ENCODE measurements at regions of chr18 and their contacts with region 1.

Region 1: GRCh38 chr18:2985628-2986027 is 27.3 kb downstream of the LPIN2 start:
- DNase-seq: peak; percentile 32
- ATAC-seq: peak; percentile 53
- H3K4me3 Mint-ChIP-seq: no peak overlapping the region
- H3K27ac Mint-ChIP-seq: peak overlapping the region; percentile 34
- H3K4me1 Mint-ChIP-seq: peaks cover 72% of the 10 kb centered on the region
- H3K27me3 Mint-ChIP-seq: no peaks in the 10 kb centered on the region
- CTCF ChIP-seq: peak; percentile 74

Region 2: DNA sequence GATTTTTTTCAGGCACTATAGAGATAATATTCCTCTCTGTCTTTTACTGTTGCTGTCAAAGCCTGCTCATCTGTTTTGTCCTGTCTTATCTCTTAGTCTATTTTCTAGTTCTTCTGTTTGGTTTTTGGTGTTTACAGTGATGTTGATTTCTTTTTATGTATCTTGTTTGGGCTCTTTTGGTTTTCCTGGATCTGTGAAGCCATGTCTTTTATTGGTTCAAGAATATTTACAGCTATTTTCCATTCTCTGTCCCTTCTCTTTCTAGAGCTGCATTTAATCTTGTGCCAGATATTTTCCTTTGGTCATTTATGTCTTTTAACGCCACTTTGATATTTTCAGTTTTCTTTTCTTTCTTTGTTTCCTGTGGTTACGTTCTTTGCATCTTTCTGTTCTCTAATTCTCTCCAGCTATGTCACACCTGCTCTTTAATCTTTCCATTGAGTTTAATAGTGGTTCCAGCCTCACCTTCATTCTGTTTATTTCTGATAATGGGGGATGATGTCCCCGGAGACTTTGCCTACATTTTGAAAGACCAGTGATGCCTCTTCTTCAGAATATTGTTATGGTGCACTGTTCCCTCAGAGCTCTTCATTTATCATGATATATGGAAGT is 298.1 kb before region 1 on chr18:
- CTCF ChIA-PET with region 1: no interaction called
- POLR2A ChIA-PET with region 1: no interaction called
- intact Hi-C with region 1: no loop called
- DNase-seq: no peak
- ATAC-seq: peak; percentile 32
- H3K4me3 Mint-ChIP-seq: peak overlapping the region; percentile 31
- H3K27ac Mint-ChIP-seq: peak overlapping the region; percentile 91
- H3K4me1 Mint-ChIP-seq: peaks cover 69% of the 10 kb centered on the region
- H3K27me3 Mint-ChIP-seq: no peaks in the 10 kb centered on the region
- CTCF ChIP-seq: no peak

Region 3: DNA sequence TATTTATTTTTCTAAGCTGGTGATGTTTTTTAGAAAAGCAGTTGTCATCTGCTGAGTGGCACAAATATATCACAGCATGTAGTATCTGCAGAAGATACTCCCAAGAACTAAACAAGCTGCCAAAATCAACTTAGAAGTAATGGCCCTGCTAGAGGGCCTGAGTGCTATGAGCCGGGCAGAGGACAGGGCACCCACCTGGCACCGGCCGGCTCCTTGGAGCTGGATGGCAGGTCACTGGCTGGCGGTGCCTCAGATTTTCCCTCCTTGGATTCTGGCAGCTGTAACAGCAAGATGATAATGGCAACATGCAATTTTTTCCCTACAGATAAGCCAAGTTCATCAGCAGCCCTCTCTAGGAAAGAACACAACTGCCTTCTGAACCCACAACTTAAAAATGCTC is 59.1 kb before region 1 on chr18:
- CTCF ChIA-PET with region 1: interaction called, 77 read pairs
- POLR2A ChIA-PET with region 1: no interaction called
- intact Hi-C with region 1: no loop called
- DNase-seq: no peak
- ATAC-seq: no peak
- H3K4me3 Mint-ChIP-seq: no peak overlapping the region
- H3K27ac Mint-ChIP-seq: no peak overlapping the region
- H3K4me1 Mint-ChIP-seq: no peaks in the 10 kb centered on the region
- H3K27me3 Mint-ChIP-seq: no peaks in the 10 kb centered on the region
- CTCF ChIP-seq: no peak

Region 4: DNA sequence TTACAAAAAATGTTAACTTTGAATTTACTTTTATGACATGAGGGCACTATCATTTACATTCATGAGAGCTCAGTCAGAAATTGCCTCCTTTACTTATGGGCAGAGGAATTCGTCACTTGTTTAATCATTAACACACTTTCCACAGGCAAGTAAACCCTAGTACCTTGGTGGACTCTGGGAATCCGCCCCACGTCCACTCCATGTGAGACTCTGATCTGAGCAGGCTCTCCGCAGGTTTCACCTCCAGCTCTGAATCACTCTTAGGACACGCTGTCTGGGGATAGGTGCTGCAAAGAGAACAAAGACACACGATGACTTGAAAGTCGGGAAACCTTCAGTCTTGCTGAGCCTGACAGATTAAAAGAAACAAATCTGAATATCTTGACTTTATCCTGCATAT is 46.3 kb before region 1 on chr18:
- CTCF ChIA-PET with region 1: interaction called, 77 read pairs
- POLR2A ChIA-PET with region 1: interaction called, 3 read pairs
- intact Hi-C with region 1: no loop called
- DNase-seq: no peak
- ATAC-seq: no peak
- H3K4me3 Mint-ChIP-seq: no peak overlapping the region
- H3K27ac Mint-ChIP-seq: peak overlapping the region; percentile 49
- H3K4me1 Mint-ChIP-seq: peaks cover 51% of the 10 kb centered on the region
- H3K27me3 Mint-ChIP-seq: no peaks in the 10 kb centered on the region
- CTCF ChIP-seq: no peak

Region 5: GRCh38 chr18:2958819-2959298 is 26.8 kb before region 1 on chr18:
- CTCF ChIA-PET with region 1: interaction called, 152 read pairs
- POLR2A ChIA-PET with region 1: interaction called, 142 read pairs
- intact Hi-C with region 1: loop called (anchors 1 kb)
- DNase-seq: peak; percentile 76
- ATAC-seq: peak; percentile 28
- H3K4me3 Mint-ChIP-seq: peak overlapping the region; percentile 65
- H3K27ac Mint-ChIP-seq: peak overlapping the region; percentile 99
- H3K4me1 Mint-ChIP-seq: peaks cover 84% of the 10 kb centered on the region
- H3K27me3 Mint-ChIP-seq: no peaks in the 10 kb centered on the region
- CTCF ChIP-seq: no peak

Region 6: GRCh38 chr18:3151399-3152264 is 166.0 kb after region 1 on chr18:
- CTCF ChIA-PET with region 1: interaction called, 13 read pairs
- POLR2A ChIA-PET with region 1: no interaction called
- intact Hi-C with region 1: no loop called
- DNase-seq: no peak
- ATAC-seq: no peak
- H3K4me3 Mint-ChIP-seq: no peak overlapping the region
- H3K27ac Mint-ChIP-seq: no peak overlapping the region
- H3K4me1 Mint-ChIP-seq: peaks cover 2% of the 10 kb centered on the region
- H3K27me3 Mint-ChIP-seq: no peaks in the 10 kb centered on the region
- CTCF ChIP-seq: peak; percentile 82